ENCODE measurements at regions of chr9 and their contacts with region 1.

Region 1: DNA sequence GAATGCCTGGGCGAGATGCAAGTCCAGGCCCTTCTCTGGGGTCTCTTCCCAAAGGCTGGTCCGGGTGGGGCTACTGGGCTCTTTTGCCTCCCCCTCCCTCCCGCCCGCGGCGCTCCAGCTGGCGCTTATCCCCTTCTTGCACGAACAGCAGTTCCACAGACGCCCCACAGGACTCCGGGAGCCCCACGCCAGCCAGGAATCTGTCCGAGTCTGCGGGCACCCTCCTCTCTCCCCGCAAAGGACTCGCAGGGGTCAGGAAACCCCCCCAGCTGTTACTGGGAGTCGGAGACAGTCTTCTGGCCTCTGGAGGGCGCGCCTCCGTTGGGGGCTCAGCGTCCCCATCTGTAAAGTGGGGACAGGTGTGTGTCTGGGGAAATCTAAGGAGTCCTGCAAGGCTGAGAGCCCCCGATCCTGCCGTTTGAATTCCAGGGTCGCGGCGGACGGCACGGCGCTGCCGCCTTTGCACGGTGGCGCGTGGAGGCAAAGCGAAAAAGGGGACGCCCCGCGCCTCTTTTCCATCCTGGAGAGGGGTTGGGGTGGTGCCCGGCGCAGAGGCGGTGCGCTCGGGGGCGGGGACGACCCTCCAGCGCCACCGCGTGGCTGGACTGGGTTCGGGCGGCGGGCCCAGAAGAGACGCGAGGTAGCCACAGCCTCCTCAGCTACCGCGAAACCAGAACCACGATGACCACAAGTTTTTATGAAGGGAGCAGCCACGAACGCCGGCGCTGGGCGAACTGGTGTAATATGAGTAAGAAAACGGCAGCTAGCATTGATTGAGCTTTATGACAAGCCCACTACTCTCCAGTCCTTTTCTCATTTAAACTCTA is 2.9 kb upstream of the CCIN start:
- DNase-seq: peak; percentile 84
- H3K4me3 ChIP-seq: peak overlapping the region; percentile 55 to 61
- H3K27ac ChIP-seq: peak overlapping the region in 1 of 2 donors; percentile 74
- H3K4me1 ChIP-seq: peaks cover 9% of the 10 kb centered on the region
- H3K27me3 ChIP-seq: no peaks in the 10 kb centered on the region
- CTCF ChIP-seq: peak; percentile 75 to 94 (median 85)
- POLR2A ChIP-seq: no peak

Region 2: DNA sequence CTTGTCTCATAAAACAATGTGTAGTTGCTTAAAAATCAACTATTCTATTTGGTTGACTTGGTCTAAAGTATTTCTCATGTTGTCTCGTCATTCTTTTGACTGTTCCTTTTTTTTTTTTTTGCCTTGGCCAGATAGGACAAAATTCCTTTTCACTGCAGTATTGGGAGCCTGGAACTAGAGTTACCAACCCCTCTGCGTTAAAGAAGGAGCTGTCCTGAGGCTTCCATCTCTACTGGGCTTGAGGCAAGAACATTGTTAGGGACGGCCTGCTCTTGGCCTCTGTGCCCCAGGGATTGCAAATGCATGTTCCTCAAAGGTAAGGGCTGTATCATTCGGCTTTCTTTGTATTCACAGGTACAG is 376.3 kb before region 1 on chr9:
- intact Hi-C with region 1: no loop called
- DNase-seq: no peak
- H3K4me3 ChIP-seq: no peak overlapping the region
- H3K27ac ChIP-seq: no peak overlapping the region
- H3K4me1 ChIP-seq: peaks cover 26% of the 10 kb centered on the region
- H3K27me3 ChIP-seq: no peaks in the 10 kb centered on the region
- CTCF ChIP-seq: no peak
- POLR2A ChIP-seq: no peak

Region 3: DNA sequence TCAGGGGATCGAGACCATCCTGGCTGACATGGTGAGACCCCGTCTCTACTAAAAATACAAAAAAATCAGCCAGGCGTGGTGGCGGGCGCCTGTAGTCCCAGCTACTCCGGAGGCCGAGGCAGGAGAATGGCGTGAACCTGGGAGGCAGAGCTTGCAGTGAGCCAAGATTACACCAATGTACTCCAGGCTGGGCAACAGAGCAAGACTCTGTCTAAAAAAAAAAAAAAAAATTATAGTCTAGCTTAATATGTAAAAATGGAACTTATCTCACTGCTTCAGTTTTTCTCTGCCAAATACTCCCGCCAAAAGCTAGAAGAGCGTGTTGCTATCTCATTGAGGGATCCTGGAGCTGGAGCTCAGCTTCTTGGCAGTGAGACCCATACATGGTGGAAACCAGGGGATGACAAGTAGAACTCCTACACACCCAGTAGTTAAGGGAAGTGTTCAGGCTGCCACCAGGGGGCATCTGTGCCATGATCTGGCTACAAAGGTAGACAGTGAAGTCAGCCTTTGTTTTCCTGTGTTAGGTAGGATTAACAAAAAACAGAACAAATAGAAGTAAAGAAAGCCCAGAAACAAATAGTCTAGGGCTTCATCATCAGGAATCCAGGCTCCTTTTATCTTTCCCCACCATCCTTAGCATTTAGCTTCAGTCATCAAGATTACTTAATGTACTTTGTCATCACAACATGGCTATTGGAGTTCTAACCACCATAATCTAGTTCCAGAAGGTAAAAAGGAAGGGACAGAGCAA is 63.4 kb before region 1 on chr9:
- intact Hi-C with region 1: loop called (anchors 10 kb)
- DNase-seq: peak; percentile 90
- H3K4me3 ChIP-seq: no peak overlapping the region
- H3K27ac ChIP-seq: no peak overlapping the region
- H3K4me1 ChIP-seq: no peaks in the 10 kb centered on the region
- H3K27me3 ChIP-seq: no peaks in the 10 kb centered on the region
- CTCF ChIP-seq: peak; percentile 62 to 78 (median 68)
- POLR2A ChIP-seq: no peak

Region 4: DNA sequence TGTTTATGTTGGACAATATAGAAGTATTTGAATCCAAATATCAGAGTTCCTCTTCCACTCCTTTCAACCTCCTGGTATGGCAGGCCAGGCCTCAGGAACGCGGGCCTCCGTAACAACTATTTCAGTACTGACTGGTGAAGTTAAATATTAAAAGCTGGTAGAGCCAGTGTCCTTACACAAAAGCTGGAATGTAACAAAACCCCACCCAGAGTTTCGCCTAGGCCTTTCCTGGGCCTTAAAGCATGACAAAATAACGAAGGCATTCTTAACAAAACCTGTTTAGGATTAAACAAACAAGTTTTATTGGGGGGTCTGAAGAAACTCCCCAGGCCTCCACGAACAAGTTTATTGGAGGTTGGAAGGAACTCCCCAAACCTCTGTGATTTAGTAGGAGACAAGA is 153.5 kb after region 1 on chr9:
- intact Hi-C with region 1: loop called (anchors 5 kb)
- DNase-seq: no peak
- H3K4me3 ChIP-seq: no peak overlapping the region
- H3K27ac ChIP-seq: no peak overlapping the region
- H3K4me1 ChIP-seq: peaks cover 18% of the 10 kb centered on the region
- H3K27me3 ChIP-seq: no peaks in the 10 kb centered on the region
- CTCF ChIP-seq: no peak
- POLR2A ChIP-seq: no peak

Measured in testis (tissue), 5 donors.